ENCODE measurements at regions of chr12 and their contacts with region 1.

Region 1: DNA sequence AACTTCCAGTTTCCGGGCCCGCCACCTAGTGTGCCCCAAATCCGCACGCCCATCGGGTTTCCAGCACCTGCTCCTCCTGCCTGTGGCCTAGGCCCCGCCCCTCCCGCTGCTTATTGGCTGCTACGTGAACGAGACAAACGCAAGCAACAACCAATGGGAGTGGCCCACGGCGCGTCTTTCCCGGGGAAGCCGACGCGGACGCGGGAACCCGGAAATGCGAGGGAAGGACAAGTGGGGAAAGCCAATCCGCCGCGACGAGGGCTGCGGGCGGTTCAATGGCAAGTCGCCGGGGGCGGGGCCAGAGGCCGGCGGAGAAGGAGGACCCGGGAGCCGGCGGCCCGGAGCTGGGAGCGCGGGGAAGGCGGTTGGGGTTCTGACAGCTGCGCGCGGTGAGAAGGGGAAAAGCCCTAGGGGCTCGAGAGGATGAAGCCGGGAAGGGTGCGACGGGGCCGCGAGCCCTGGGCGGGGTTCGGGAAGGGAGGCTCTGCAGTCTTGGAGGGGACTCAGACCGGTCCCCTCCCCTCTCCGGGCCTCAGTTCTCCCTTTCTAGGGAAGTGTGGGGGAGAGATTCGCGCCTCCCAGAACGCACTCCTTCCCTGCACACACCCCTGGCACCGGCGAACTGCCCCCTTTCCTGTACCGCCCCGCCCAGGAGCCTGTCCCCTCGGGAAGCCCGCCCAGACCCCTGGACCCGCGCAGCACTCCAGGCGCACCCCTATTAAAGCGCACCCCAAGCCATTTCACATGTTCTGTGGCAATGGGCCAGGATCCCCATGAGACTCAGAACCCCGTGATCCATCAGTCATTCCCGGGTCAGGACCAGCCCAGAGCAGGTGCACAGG is at the start of gene FICD:
- DNase-seq: peak; percentile 97
- ATAC-seq: peak; percentile 88
- H3K4me3 ChIP-seq: peak within 1 kb of the TSS; percentile 97
- H3K27ac ChIP-seq: peak within 1 kb of the TSS; percentile 84
- H3K4me1 ChIP-seq: peaks cover 23% of the 10 kb centered on the region
- H3K27me3 ChIP-seq: no peaks in the 10 kb centered on the region
- CTCF ChIP-seq: 0 out of 6 replicates have a peak, but pooled peaks of 1 of the 3 experiments have one; percentile 0
- EP300 ChIP-seq: no peak
- POLR2A ChIP-seq: peak; percentile 82
- RAD21 ChIP-seq: no peak
- polyA plus RNA-seq, gene FICD: 3.2 to 3.3 TPM

Region 2: DNA sequence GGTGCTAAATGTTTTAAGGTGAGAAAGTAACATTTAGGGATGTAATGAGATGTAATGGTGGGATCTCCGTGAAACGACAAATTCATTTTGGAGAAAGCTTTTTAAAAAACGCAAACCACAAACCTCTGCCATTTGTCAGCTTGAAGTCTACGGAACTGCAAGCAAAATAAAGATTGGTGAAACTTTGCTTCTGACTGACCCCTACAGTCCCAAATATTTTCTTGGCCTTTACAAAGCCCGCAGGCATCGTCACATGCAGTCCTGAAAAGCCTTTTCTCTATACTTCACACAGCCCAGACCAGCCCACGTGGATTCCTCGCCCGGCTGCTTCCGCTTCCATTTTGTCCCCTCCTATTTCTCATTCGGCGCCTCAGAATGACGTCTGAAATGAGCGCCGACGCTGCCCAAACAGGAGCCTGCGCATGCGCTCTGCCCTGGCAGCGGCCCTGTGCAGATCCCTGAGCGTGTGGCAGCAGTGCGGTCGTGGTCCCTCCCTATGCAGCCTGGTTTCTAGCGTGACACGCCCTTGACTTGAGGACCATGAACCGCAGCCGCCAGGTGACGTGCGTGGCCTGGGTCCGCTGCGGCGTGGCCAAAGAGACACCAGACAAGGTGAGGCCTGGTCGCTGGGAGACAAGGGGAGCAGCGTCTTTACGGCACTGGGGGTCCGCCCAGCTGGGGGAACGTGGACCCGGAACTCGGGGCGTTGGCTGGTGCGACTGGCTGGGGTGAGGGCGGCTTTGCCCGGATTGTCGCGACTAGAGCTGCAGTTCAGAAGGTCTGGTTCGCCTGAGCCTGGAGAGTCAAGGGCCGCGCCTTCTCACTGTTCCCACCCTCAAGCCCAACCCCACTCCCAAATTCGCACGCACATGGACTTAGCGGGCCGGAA is 829.6 kb before region 1 on chr12 and contains the start of gene PWP1:
- CTCF ChIA-PET with region 1: no interaction called
- POLR2A ChIA-PET with region 1: no interaction called
- RAD21 ChIA-PET with region 1: no interaction called
- SMC1A ChIA-PET with region 1: no interaction called
- in situ Hi-C with region 1: loop called (anchors 25 kb)
- intact Hi-C with region 1: no loop called
- DNase-seq: peak; percentile 84
- ATAC-seq: peak; percentile 96
- H3K4me3 ChIP-seq: peak within 1 kb of the TSS; percentile 93
- H3K27ac ChIP-seq: peak within 1 kb of the TSS; percentile 72
- H3K4me1 ChIP-seq: peaks cover 3% of the 10 kb centered on the region; the same call in 1 of the 2 replicates
- H3K27me3 ChIP-seq: no peaks in the 10 kb centered on the region
- CTCF ChIP-seq: no peak
- EP300 ChIP-seq: peak in 1 of 2 experiments; percentile 38; a peak in 1 of 4 replicates
- POLR2A ChIP-seq: peak; percentile 99
- RAD21 ChIP-seq: no peak
- polyA plus RNA-seq, gene PWP1: 244 to 283 TPM

Region 3: GRCh38 chr12:107992870-107993451 is 522.2 kb before region 1 on chr12:
- CTCF ChIA-PET with region 1: interaction called, 17 read pairs
- POLR2A ChIA-PET with region 1: interaction called, 6 read pairs
- RAD21 ChIA-PET with region 1: interaction called, 3 read pairs
- SMC1A ChIA-PET with region 1: interaction called, 8 read pairs
- in situ Hi-C with region 1: no loop called
- intact Hi-C with region 1: loop called (anchors 1 kb)
- DNase-seq: peak; percentile 2
- ATAC-seq: peak; percentile 98
- H3K4me3 ChIP-seq: no peak overlapping the region
- H3K27ac ChIP-seq: no peak overlapping the region
- H3K4me1 ChIP-seq: no peaks in the 10 kb centered on the region
- H3K27me3 ChIP-seq: no peaks in the 10 kb centered on the region
- CTCF ChIP-seq: peak; percentile 52 to 65 (median 63)
- EP300 ChIP-seq: no peak
- POLR2A ChIP-seq: no peak
- RAD21 ChIP-seq: 0 out of 2 replicates have a peak, but pooled peaks have one; percentile 28

Region 4: DNA sequence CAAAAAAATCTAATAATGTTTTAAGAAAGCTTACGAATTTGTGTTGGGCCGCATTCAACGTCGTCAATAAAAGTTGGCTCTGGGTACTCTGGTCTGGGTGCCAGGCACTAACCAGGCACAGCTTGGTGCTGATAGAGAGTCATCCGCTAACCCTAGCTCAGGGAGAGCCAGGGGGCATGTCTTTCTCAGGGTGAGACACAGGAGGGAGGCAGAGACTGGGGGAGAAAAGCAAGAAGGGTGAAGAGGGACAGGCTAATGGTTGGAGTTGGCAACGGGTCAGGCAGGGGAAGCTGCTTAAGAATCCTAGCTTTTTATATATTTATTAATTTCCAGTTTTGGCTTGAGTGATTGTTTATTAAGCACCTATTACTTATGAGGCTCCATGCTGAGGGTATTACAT is 281.0 kb before region 1 on chr12:
- CTCF ChIA-PET with region 1: interaction called, 15 read pairs
- POLR2A ChIA-PET with region 1: no interaction called
- RAD21 ChIA-PET with region 1: interaction called, 8 read pairs
- SMC1A ChIA-PET with region 1: interaction called, 14 read pairs
- in situ Hi-C with region 1: no loop called
- intact Hi-C with region 1: loop called (anchors 1 kb)
- DNase-seq: no peak
- ATAC-seq: peak; percentile 78
- H3K4me3 ChIP-seq: no peak overlapping the region
- H3K27ac ChIP-seq: no peak overlapping the region
- H3K4me1 ChIP-seq: no peaks in the 10 kb centered on the region
- H3K27me3 ChIP-seq: peaks cover 0 to 3% of the 10 kb centered on the region in 2 experiments; a peak in 3 of 4 replicates
- CTCF ChIP-seq: peak; percentile 36 to 58 (median 53); a peak in 4 of 6 replicates
- EP300 ChIP-seq: no peak
- POLR2A ChIP-seq: no peak
- RAD21 ChIP-seq: peak; percentile 85

Region 5: GRCh38 chr12:108360487-108360886 is 154.7 kb before region 1 on chr12:
- CTCF ChIA-PET with region 1: no interaction called
- POLR2A ChIA-PET with region 1: interaction called, 3 read pairs
- RAD21 ChIA-PET with region 1: no interaction called
- SMC1A ChIA-PET with region 1: interaction called, 3 read pairs
- in situ Hi-C with region 1: no loop called
- intact Hi-C with region 1: loop called (anchors 10 kb)
- DNase-seq: peak; percentile 84
- ATAC-seq: peak; percentile 86
- H3K4me3 ChIP-seq: no peak overlapping the region; the same call in 1 of the 2 replicates
- H3K27ac ChIP-seq: peak overlapping the region; percentile 57
- H3K4me1 ChIP-seq: peaks cover 30% of the 10 kb centered on the region
- H3K27me3 ChIP-seq: no peaks in the 10 kb centered on the region
- CTCF ChIP-seq: no peak
- EP300 ChIP-seq: peak; percentile 54 to 73; a peak in 3 of 4 replicates
- POLR2A ChIP-seq: no peak
- RAD21 ChIP-seq: 0 out of 2 replicates have a peak, but pooled peaks have one; percentile 21